ENCODE measurements at regions of chr2 and their contacts with region 1.

Region 1: DNA sequence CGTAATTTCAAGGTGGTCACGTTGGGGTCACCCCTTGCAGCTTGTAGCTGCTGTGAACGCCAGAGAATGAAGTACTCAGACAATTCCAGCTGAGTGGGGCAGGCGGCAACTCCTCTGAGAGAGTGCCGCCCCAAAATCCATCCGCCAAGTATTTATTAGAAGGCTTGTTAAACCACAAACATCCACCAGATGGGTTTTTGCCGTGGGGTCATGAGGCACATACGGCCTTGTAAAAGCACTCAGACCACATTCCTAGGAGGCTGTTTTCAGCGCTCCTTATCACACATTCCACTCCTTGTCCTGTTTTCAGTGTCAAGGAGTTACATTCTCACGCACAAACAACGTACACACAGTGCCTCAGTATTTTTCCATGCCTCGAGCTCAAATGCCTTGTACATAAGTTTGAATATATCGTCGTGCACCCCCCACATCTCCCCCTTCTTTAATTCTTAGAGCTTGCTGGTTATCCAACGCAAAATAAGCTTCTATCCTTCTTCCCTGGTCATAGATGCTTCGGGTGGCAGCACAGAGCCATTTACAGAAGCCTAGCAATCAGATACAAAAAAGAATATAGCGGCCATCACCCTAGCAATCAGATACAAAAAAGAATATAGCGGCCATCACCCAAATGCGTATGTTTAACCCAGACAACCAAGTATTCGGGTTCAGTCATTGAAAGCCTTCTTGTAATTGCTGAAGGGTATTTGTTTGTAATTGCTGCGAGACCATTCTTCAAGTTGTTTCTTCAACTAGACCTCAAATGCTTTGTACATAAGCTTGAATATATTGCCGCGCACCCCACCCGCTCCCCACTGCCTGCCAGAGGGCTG is 7.3 kb downstream of the ALPP start:
- DNase-seq: no peak
- H3K4me3 ChIP-seq: no peak overlapping the region
- H3K27ac ChIP-seq: no peak overlapping the region
- H3K4me1 ChIP-seq: no peaks in the 10 kb centered on the region
- CTCF ChIP-seq: no peak

Region 2: GRCh38 chr2:231917280-231918066 is 468.4 kb before region 1 on chr2:
- CTCF ChIA-PET with region 1: interaction called, 21 read pairs
- POLR2A ChIA-PET with region 1: no interaction called
- intact Hi-C with region 1: no loop called
- DNase-seq: no peak
- H3K4me3 ChIP-seq: no peak overlapping the region
- H3K27ac ChIP-seq: no peak overlapping the region
- H3K4me1 ChIP-seq: no peaks in the 10 kb centered on the region
- CTCF ChIP-seq: no peak

Region 3: DNA sequence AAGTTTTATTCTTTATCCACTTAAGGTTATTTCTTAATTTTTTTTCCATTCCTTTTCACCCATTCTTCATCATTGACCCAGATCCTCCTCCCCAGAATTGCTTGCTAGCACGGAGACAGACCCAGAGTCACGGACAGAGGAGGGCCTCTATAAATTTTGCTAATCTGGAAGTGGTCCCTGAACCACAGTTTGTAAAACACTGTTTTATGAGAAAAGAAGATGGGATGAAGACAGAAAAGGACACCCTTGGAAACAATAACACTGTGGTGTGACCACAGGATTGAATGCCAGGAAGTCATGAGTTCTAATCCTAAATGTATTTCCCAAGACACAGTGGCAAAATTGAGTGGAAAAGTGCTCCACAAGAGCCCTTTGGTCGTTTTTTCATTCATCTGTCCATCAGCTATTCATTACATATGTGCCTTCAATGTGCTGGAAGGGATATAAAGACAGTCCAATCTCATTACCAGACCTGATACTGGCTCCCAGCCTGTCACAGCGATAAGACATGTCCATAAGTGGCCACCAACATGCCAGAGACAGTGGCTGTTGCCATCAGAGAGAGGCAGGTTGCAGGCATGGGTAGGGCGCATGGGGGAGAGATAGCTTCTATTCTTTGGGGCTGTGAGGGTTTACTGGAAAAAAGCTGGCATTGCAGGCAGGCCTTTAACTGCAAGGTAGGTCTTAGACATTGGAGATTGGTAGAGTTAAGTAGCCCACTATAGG is 182.5 kb before region 1 on chr2:
- CTCF ChIA-PET with region 1: no interaction called
- POLR2A ChIA-PET with region 1: no interaction called
- intact Hi-C with region 1: no loop called
- DNase-seq: no peak
- H3K4me3 ChIP-seq: no peak overlapping the region
- H3K27ac ChIP-seq: no peak overlapping the region
- H3K4me1 ChIP-seq: no peaks in the 10 kb centered on the region
- CTCF ChIP-seq: no peak

Region 4: DNA sequence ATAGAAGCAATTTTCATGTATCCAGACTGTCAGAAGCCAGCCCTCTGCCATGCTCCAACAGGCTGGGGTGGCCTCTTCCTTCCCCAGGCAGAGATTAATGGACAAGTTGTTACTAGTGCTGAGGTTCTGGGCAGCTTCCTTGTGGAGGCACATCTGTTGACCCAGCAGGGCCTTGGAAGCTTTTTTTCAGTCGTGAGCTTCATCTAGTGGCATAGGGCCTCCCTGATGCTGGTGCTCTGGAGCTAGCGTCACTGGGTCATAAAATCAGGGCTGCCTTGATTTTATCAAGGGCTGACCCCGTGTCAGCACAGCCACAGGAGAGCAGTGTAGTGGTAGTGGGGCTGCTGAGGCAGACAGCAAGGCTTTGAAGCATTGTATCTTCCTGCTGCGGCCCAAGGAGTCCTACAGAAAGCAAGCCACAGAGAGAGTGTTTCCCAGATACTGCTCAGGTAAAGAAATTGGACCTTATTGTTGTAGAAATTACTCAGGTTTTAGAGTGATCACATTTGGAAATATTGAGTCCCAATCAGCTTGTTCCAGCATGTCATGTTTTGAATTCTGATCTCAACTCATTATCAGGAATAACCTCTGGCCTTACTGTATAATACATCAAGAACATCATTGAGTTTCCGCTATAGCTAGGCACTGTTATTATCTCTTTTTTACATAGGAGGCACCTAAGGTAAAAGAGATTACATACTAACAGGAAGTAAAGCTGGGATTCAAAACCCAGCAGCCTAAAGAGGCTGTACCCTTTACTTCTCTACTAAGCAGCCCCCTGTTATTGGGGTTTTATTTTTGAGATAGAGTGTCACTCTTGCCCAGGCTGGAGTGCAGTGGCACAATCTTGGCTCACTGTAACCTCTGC is 99.6 kb before region 1 on chr2:
- CTCF ChIA-PET with region 1: no interaction called
- POLR2A ChIA-PET with region 1: no interaction called
- intact Hi-C with region 1: no loop called
- DNase-seq: no peak
- H3K4me3 ChIP-seq: no peak overlapping the region
- H3K27ac ChIP-seq: no peak overlapping the region
- H3K4me1 ChIP-seq: no peaks in the 10 kb centered on the region
- CTCF ChIP-seq: no peak

Region 5: DNA sequence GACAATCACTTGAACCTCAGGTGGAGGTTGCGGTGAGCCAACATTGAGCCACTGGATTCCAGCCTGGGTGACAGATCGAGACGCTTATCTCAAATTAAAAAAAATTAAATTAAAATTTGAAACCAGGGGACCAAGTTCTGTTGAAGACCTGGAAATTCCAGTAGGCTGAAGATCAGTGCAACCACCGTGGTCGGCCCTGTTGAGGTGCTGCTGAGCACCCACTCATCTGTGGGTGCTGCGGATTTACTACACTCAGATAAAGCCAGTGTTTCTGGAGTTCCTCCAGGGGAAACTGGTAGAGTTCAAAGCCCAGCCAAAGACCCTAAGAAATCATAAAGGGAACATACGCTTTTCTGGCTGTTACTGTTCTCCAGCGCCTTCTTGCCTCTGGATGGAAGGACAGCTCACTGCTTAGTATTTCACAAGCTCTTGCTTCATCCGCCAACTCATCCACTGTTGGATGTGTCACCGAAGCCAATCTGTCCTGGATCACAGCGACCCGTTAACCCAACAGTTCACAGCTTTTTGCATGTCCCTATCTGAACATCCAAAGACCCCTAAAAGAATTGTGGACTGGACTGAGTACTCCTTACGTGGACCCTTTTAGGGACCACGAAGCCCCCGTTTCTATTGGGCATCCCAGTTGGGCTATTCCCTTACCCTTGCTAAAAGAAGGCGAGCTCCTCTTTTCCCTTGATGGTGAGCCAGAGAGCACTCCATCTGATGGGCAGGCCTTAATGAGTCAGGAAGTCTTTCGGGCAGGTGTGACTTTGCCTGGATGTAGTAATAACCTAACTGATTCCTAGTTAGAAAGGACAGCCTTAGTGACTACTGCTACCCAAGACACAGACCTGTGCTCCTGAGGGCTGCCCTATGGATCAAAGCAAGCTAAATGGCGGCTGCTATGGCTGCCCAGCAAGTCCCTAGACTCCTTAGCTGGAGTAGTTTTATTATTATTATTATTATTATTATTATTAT is 13.4 kb before region 1 on chr2:
- CTCF ChIA-PET with region 1: no interaction called
- POLR2A ChIA-PET with region 1: no interaction called
- intact Hi-C with region 1: no loop called
- DNase-seq: no peak
- H3K4me3 ChIP-seq: no peak overlapping the region
- H3K27ac ChIP-seq: no peak overlapping the region
- H3K4me1 ChIP-seq: peaks cover 9% of the 10 kb centered on the region
- CTCF ChIP-seq: no peak

Measured in OCI-LY7 (cell line).